Activated naive CD4-positive, alpha-beta T cell treated with anti-CD3 and anti-CD28 coated beads for 36 hours (primary cell): ENCODE measurements at regions of chr7 and their contacts with region 1.

Region 1: GRCh38 chr7:116138202-116138801 is 72.0 kb upstream of the TES start:
- DNase-seq: peak; percentile 34
- H3K4me3 Mint-ChIP-seq: no peak overlapping the region
- H3K27ac Mint-ChIP-seq: no peak overlapping the region
- H3K4me1 Mint-ChIP-seq: peaks cover 9% of the 10 kb centered on the region
- H3K27me3 Mint-ChIP-seq: peaks cover 2% of the 10 kb centered on the region

Region 2: GRCh38 chr7:116165717-116166116 is 27.4 kb after region 1 on chr7:
- CTCF ChIA-PET with region 1: interaction called, 9 read pairs
- intact Hi-C with region 1: loop called (anchors 1 kb)
- DNase-seq: no peak
- H3K4me3 Mint-ChIP-seq: no peak overlapping the region
- H3K27ac Mint-ChIP-seq: no peak overlapping the region
- H3K4me1 Mint-ChIP-seq: peaks cover 5% of the 10 kb centered on the region
- H3K27me3 Mint-ChIP-seq: peaks cover 11% of the 10 kb centered on the region

Region 3: GRCh38 chr7:116315293-116315692 is 177.0 kb after region 1 on chr7:
- CTCF ChIA-PET with region 1: no interaction called
- intact Hi-C with region 1: no loop called
- DNase-seq: no peak
- H3K4me3 Mint-ChIP-seq: no peak overlapping the region
- H3K27ac Mint-ChIP-seq: no peak overlapping the region
- H3K4me1 Mint-ChIP-seq: peaks cover 4% of the 10 kb centered on the region
- H3K27me3 Mint-ChIP-seq: peaks cover 2% of the 10 kb centered on the region

Region 4: GRCh38 chr7:116525913-116526861 is 387.9 kb after region 1 on chr7:
- CTCF ChIA-PET with region 1: interaction called, 5 read pairs
- intact Hi-C with region 1: loop called (anchors 2 kb)
- DNase-seq: peak; percentile 65
- H3K4me3 Mint-ChIP-seq: peak overlapping the region; percentile 85
- H3K27ac Mint-ChIP-seq: no peak overlapping the region
- H3K4me1 Mint-ChIP-seq: peaks cover 19% of the 10 kb centered on the region
- H3K27me3 Mint-ChIP-seq: peaks cover 62% of the 10 kb centered on the region

Region 5: GRCh38 chr7:116647290-116647689 is 509.0 kb after region 1 on chr7:
- CTCF ChIA-PET with region 1: no interaction called
- intact Hi-C with region 1: no loop called
- DNase-seq: no peak
- H3K4me3 Mint-ChIP-seq: no peak overlapping the region
- H3K27ac Mint-ChIP-seq: no peak overlapping the region
- H3K4me1 Mint-ChIP-seq: no peaks in the 10 kb centered on the region
- H3K27me3 Mint-ChIP-seq: peaks cover 23% of the 10 kb centered on the region

Region 6: DNA sequence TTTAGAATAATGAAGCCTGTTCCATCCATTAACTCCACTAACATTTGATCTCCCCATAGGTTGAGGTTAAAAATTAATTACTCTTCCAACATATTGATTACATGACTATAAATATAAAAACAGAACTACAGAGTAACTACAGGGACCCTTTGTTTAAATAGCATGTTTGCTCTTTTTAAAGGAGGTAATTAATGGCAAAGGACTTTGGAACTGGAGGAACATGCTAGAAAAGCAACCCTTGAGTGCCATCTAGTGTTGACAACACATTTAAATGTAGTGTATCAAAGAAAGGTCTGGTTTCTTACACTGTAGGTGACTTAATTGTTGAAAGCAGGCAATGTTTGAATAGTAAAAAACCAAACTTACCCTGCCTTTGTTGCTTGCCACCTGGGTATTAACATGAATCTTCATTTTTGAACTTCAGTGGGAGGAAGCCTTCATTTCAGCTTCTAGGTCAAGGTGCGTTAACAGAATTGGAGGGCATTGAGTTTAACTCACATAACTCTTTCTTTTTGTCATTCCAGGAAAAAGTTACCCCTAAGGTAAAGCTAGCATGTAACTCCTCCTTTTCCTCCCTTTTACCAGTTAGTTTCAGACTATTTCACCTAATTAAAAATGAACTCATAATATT is 671.4 kb after region 1 on chr7:
- CTCF ChIA-PET with region 1: no interaction called
- intact Hi-C with region 1: loop called (anchors 1 kb)
- DNase-seq: peak; percentile 21
- H3K4me3 Mint-ChIP-seq: no peak overlapping the region
- H3K27ac Mint-ChIP-seq: no peak overlapping the region
- H3K4me1 Mint-ChIP-seq: no peaks in the 10 kb centered on the region
- H3K27me3 Mint-ChIP-seq: no peaks in the 10 kb centered on the region